Tibial artery (tissue), 4 donors: ENCODE measurements at regions of chr15 and their contacts with region 1.

Region 1: DNA sequence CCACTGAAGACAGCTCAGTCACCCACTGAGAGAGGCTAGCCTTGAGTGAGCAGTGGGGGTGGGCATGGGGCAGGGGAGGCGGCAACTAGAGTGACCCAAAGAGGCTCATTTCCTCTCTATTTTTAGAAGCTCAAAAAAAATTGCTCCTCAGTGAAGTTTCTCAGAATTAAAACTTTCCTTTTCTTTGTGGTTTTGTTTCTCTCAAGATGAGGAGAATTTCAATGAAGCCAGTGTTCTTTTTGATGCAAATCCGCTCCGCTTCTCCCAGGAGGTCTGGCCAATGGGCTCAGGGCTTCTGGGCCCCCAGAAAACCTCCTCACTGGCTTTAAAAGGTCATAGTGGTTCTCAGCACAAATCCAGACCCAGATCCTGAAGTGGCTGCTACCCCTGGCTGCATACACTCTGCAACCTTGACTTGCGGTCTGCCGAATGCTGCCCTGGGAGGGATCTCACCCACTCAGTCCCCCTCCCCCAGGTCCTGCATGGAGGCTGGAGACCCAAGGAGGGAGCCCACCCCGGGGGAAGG is at the start of gene ACSBG1:
- DNase-seq: no peak
- H3K4me3 ChIP-seq: no peak within 1 kb of the TSS
- H3K27ac ChIP-seq: no peak within 1 kb of the TSS
- H3K4me1 ChIP-seq: no peaks in the 10 kb centered on the region
- H3K27me3 ChIP-seq: peaks cover 0 to 16% of the 10 kb centered on the region in 2 donors
- CTCF ChIP-seq: no peak

Region 2: GRCh38 chr15:77966540-77967290 is 267.9 kb before region 1 on chr15:
- intact Hi-C with region 1: loop called (anchors 10 kb)
- DNase-seq: no peak
- H3K4me3 ChIP-seq: no peak overlapping the region
- H3K27ac ChIP-seq: no peak overlapping the region
- H3K4me1 ChIP-seq: no peaks in the 10 kb centered on the region
- H3K27me3 ChIP-seq: no peaks in the 10 kb centered on the region
- CTCF ChIP-seq: peak; percentile 82 to 86

Region 3: GRCh38 chr15:78131295-78132061 is 103.1 kb before region 1 on chr15 and contains the start of gene CIB2:
- intact Hi-C with region 1: no loop called
- DNase-seq: peak in 1 of 2 donors; percentile 76
- H3K4me3 ChIP-seq: peak within 1 kb of the TSS; percentile 70 to 78
- H3K27ac ChIP-seq: peak within 1 kb of the TSS; percentile 80 to 82
- H3K4me1 ChIP-seq: peaks cover 0 to 19% (median 9%) of the 10 kb centered on the region in 4 donors
- H3K27me3 ChIP-seq: no peaks in the 10 kb centered on the region
- CTCF ChIP-seq: peak; percentile 80 to 91